Activated CD8-positive, alpha-beta T cell treated with anti-CD3 and anti-CD28 coated beads for 36 hours (primary cell): ENCODE measurements at regions of chr11 and their contacts with region 1.

Region 1: DNA sequence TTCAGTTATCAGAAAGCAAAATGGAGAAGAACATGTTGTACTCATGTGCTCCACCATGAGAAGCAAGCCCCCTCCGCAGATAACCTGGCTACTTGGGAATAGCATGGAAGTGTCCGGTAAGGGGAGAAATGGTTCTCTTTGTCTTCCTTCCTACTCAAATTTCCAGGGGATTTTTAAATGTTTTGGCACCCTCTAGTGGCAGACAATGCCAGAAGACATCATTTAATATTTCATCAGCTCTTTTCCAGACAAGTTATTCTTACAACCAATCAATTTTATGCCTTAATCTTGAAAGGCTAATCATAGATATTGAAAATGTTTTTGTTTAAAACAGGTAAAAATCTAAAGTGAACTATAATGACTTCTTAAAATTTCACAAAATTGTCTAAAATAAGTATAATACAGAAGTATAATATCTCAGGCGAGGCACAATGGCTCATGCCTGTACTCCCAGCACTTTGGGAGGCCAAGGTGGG is 15.7 kb downstream of the CRTAM start:
- DNase-seq: peak; percentile 64
- ATAC-seq: no peak
- H3K4me3 Mint-ChIP-seq: no peak overlapping the region
- H3K27ac Mint-ChIP-seq: no peak overlapping the region
- H3K4me1 Mint-ChIP-seq: peaks cover 66% of the 10 kb centered on the region
- H3K27me3 Mint-ChIP-seq: no peaks in the 10 kb centered on the region
- CTCF ChIP-seq: peak; percentile 95

Region 2: DNA sequence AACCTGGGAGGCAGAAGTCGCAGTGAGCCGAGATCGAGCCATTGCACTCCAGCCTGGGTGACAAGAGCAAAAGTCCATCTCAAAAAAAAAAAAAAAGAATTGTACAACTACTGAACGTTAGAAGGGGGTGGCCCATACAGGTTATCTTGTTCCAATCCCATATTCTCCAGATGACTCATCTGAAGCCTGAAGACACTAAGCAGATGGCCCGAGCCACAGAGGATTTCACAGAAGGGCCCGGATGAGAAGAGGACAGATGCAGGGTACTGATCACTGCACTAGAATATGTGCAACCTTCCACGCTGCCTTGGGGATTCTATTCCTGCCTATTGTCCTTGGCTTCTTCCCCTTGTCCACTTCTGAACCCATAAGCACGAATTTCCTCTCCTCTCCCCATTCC is 269.3 kb before region 1 on chr11:
- CTCF ChIA-PET with region 1: interaction called, 9 read pairs
- POLR2A ChIA-PET with region 1: interaction called, 5 read pairs
- intact Hi-C with region 1: loop called (anchors 5 kb)
- DNase-seq: no peak
- ATAC-seq: no peak
- H3K4me3 Mint-ChIP-seq: no peak overlapping the region
- H3K27ac Mint-ChIP-seq: no peak overlapping the region
- H3K4me1 Mint-ChIP-seq: peaks cover 10% of the 10 kb centered on the region
- H3K27me3 Mint-ChIP-seq: peaks cover 9% of the 10 kb centered on the region
- CTCF ChIP-seq: no peak

Region 3: DNA sequence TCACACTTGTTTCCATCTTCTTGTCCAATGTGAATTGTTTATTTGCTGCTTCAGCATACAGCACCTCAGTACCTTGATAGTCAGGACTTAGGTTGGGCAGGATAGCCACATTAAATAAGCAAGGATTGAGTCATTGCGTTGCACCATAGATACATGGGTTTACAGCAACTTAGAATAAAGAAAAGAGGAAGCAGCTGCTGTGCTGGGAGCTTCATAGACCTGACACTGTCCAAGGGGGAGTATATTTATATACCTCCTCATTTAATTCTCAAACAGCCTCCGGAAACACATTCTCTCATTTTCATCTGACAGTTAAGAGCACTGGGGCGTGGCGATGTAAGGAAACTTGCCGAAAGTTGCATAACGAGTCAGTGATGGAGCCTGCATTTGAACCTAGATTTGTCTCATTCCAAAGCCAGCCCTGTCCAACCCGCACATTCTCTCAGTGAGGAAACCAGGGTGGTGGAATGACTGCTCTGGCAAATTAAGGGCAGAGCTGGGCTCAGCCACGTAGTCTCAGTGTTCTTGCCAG is 156.3 kb before region 1 on chr11:
- CTCF ChIA-PET with region 1: interaction called, 7 read pairs
- POLR2A ChIA-PET with region 1: interaction called, 3 read pairs
- intact Hi-C with region 1: loop called (anchors 10 kb)
- DNase-seq: peak; percentile 71
- ATAC-seq: peak; percentile 77
- H3K4me3 Mint-ChIP-seq: peak overlapping the region; percentile 46
- H3K27ac Mint-ChIP-seq: peak overlapping the region; percentile 82
- H3K4me1 Mint-ChIP-seq: peaks cover 87% of the 10 kb centered on the region
- H3K27me3 Mint-ChIP-seq: no peaks in the 10 kb centered on the region
- CTCF ChIP-seq: no peak

Region 4: DNA sequence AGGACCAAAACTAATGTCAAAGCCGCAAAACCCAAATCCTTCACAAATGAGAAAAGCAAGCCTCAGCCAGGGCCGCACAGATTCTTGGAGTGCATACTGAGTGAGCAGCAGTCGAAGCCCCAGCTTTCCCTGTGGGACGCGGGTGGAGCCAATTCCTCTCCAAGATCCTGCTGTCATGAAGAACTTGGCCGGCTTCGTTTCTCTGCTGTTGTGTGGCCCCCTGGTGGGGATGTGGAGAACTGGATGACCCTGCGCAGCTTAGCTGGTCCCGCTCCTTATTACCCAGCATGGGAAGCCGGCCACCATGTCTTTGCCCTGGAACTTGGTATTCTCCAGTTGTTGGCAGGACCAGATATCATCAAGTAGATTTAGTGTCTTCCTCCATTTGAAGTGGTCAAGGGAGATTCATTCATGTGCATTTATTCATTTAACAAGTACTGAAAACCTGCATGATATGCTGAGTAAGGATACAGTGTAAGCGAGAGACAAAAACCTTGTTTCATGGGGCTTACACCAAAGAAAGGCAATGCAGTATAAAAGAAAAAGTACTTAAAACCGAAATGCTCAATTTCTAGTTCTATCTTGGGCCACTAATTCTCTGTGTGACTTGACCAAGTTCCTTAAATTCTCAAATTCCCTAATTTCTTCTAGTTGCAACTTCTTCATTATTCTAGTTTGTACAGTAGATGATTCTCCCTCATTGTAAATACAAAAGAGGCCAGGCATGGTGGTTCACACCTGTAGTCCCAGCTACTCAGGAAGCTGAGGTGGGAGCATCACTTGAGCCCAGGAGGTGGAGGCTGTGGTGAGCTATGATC is 72.4 kb before region 1 on chr11:
- CTCF ChIA-PET with region 1: interaction called, 352 read pairs
- POLR2A ChIA-PET with region 1: interaction called, 3 read pairs
- intact Hi-C with region 1: no loop called
- DNase-seq: peak; percentile 85
- ATAC-seq: peak; percentile 88
- H3K4me3 Mint-ChIP-seq: no peak overlapping the region
- H3K27ac Mint-ChIP-seq: no peak overlapping the region
- H3K4me1 Mint-ChIP-seq: peaks cover 19% of the 10 kb centered on the region
- H3K27me3 Mint-ChIP-seq: no peaks in the 10 kb centered on the region
- CTCF ChIP-seq: peak; percentile 92

Region 5: DNA sequence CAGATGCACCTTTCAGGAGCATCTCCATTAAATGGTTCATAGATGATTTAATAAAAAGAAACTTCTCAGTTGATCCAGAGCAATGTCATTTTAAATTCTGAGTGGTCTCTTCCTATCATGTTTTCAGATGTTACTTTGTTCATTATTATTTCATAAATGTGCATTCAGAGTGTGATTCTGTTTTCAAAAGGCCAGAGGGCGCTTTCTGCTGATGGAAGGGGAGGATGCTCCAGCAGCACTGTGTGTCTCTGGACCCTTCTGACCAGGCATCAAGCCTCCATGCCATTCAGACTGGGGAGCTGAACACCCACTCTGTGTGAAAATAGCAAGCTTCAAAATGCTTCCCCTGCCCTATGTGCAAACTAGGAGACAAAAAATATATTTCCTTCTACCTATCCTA is 39.6 kb before region 1 on chr11:
- CTCF ChIA-PET with region 1: interaction called, 108 read pairs
- POLR2A ChIA-PET with region 1: interaction called, 5 read pairs
- intact Hi-C with region 1: loop called (anchors 5 kb)
- DNase-seq: peak; percentile 27
- ATAC-seq: peak; percentile 58
- H3K4me3 Mint-ChIP-seq: no peak overlapping the region
- H3K27ac Mint-ChIP-seq: no peak overlapping the region
- H3K4me1 Mint-ChIP-seq: peaks cover 42% of the 10 kb centered on the region
- H3K27me3 Mint-ChIP-seq: no peaks in the 10 kb centered on the region
- CTCF ChIP-seq: peak; percentile 39

Region 6: DNA sequence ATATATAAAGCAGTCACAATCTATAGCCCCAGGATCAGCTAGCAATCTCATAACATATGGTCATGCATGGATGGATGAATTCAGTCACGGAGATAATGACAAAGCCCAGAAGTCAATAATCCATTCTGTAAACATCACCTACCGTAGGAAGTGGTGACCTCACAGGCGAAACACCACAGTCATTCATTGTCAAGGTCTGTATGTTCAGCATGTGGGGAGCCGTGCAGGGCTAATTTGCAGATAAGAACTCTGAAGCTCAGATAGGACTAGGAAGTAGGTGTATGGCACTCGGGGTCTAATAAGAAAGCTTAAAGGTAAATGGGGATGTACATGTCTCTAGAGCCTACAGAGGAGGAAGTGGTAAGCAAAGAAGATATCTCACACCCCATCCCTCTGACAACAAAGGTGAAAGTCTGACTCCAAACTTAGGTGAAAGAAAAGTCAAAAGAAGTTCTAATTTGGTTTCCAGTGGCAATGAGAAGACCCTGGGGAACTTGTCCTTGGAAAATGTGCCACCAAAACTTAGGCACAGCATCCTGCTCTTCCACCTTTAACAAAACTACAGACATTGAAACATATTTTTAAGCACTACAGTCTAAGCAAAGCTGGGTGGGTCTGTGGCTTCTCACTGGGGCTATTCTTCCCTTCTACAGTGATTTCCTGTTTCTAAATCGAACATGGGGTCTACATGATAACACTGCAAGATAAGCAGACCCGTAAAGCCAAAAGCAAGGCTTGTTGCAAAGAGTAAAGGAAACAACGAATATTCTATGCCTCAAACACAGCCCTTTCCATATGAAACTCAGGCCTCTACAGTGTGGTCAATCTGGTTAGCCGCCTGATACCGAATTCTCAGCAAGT is 10.5 kb before region 1 on chr11:
- CTCF ChIA-PET with region 1: interaction called, 80 read pairs
- POLR2A ChIA-PET with region 1: interaction called, 61 read pairs
- intact Hi-C with region 1: loop called (anchors 2 kb)
- DNase-seq: peak; percentile 86
- ATAC-seq: peak; percentile 67
- H3K4me3 Mint-ChIP-seq: peak overlapping the region; percentile 76
- H3K27ac Mint-ChIP-seq: peak overlapping the region; percentile 97
- H3K4me1 Mint-ChIP-seq: peaks cover 69% of the 10 kb centered on the region
- H3K27me3 Mint-ChIP-seq: no peaks in the 10 kb centered on the region
- CTCF ChIP-seq: no peak

Region 7: GRCh38 chr11:123054301-123055065 is 200.5 kb after region 1 on chr11:
- CTCF ChIA-PET with region 1: interaction called, 12 read pairs
- POLR2A ChIA-PET with region 1: interaction called, 17 read pairs
- intact Hi-C with region 1: no loop called
- DNase-seq: peak; percentile 39
- ATAC-seq: peak; percentile 73
- H3K4me3 Mint-ChIP-seq: peak overlapping the region; percentile 12
- H3K27ac Mint-ChIP-seq: peak overlapping the region; percentile 99
- H3K4me1 Mint-ChIP-seq: peaks cover 39% of the 10 kb centered on the region
- H3K27me3 Mint-ChIP-seq: no peaks in the 10 kb centered on the region
- CTCF ChIP-seq: peak; percentile 83